BJ (cell line): ENCODE measurements at regions of chr1 and their contacts with region 1.

Region 1: GRCh38 chr1:21324368-21325141 is 34.3 kb upstream of the ECE1 start:
- DNase-seq: peak; percentile 67
- H3K4me3 ChIP-seq: no peak overlapping the region
- H3K27me3 ChIP-seq: no peaks in the 10 kb centered on the region
- CTCF ChIP-seq: no peak

Region 2: DNA sequence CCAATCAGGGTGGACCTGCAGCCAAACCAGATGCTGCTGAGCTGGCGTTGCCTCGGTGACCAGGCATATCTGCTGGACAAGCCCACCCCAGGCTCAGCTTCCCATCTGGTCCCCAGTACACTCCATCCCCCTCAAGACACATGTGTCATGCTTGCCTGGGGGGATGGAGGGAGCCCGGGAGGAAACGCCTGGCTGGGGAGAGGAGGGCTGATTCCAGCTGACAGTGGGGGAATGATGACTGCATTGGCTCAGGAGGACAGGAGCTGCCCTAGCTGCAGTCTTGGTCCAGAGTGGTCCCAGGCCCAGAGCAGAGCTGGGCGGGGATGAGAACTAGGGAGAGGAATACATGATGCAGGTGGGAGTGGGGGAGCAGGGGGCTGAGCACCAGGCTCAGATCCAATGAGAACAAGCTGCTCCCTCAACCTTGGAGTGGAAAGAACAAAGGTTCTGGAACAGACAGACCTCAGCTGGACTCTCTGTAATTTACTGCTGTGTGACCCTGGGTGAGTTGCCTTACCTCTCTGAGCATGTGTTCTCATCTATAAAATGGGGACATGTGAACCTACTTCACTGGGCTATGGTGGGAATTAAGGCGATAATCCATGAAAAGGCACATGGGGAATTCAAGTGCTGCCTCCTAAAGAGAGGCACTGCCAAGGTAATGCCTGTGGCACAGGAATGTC is 11.2 kb before region 1 on chr1:
- CTCF ChIA-PET with region 1: interaction called, 14 read pairs
- POLR2A ChIA-PET with region 1: no interaction called
- DNase-seq: peak; percentile 67
- H3K4me3 ChIP-seq: no peak overlapping the region
- H3K27me3 ChIP-seq: no peaks in the 10 kb centered on the region
- CTCF ChIP-seq: no peak

Region 3: DNA sequence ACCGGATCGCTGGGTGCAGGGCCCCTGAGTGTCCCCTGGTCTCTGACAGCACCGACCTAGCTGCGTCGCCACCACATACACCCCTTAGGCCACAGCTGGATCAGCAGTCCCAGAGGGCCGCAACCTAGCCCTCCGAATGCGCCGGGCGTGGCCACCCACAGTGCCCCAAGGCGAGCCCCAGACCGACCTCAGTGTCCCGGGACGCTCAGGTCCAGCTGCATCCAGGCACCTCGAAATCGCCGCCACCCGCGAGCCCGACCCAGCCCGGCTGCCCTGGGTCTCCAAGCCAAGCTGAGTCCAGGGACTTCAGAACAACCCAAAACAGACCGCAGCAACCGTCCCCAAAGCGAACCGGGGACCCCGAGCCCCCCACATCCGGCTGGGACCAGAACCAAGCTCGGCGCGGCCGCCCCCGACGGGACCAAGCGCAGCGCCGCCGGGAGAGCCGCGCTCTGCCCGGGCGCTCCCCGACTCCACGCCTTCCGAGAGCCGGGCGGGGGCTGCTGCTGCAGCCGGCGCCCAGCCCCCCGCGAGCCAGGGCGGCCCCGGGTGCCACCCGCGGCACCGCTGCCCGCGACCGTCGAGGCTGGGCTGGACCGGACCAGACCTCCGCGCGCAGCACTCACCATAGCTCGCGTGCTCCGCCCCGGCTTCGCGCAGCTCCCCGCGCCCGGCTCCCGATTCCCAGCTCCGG is 20.3 kb after region 1 on chr1:
- CTCF ChIA-PET with region 1: no interaction called
- POLR2A ChIA-PET with region 1: no interaction called
- DNase-seq: no peak
- H3K4me3 ChIP-seq: peak overlapping the region; percentile 85
- H3K27me3 ChIP-seq: no peaks in the 10 kb centered on the region
- CTCF ChIP-seq: no peak

Region 4: DNA sequence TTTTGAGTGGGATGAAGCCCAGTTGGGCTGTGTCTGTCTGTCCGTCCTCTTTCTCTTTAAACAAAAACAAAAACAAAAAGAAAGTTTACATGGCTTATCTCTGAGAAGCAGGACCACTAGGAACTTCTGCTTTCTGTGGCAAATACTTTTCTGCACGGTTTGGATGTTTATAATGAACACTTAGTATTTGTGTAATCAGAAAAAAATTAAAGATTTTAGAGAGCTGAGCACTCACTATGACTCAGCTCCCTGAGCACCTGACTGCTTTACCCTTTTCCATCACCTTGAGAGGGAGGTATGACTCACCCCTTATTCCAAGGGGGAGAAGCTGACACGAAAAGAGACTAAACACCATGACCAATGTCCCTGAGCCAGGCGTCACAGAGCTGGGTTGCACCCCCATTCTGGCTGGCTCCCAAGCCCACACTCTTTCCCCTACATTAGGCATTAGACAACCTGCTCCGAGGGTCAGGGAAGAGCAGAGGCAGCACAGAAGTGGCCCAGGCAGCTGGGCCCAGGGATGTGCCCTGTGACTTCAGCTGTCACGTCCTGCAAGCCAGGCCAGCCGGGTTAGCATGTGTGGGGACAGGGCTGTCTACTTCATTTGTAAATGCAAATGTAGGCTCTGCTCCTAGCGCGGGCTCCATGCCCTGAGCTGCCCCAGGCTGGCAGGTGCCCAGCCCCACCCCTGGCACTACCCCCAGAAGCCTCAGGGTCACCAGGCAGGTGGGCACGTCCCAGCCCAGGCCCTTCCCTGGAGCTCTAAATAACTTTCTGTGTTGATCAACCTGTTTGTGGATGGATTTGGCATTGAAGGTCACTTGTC is 314.2 kb after region 1 on chr1:
- CTCF ChIA-PET with region 1: no interaction called
- POLR2A ChIA-PET with region 1: no interaction called
- DNase-seq: no peak
- H3K4me3 ChIP-seq: no peak overlapping the region
- H3K27me3 ChIP-seq: peaks cover 24% of the 10 kb centered on the region
- CTCF ChIP-seq: no peak